Panc1 (cell line): ENCODE measurements at regions of chr4 and their contacts with region 1.

Region 1: DNA sequence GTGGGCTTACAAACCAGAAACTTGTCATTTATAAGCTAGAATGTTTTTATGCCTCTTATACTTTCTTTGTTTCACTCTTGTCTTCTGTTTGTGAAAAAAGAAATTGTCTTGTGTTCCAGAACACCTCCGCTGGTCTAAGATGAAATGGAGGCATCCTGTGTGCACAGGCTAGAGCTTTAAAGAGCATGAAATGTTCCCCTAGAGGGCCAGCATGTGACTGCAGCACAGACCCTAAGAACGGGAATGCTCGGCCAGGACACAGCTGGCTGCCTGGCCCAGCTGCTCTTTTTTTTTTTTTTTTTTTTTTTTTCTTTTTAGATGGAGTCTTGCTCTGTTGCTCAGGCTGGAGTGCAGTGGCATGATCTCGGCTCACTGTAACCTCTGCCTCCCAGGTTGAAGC is 33.6 kb downstream of the SETD7 start:
- DNase-seq: no peak
- ATAC-seq: no peak
- H3K4me3 ChIP-seq: no peak overlapping the region
- H3K27ac ChIP-seq: no peak overlapping the region
- H3K4me1 ChIP-seq: no peaks in the 10 kb centered on the region
- H3K27me3 ChIP-seq: no peaks in the 10 kb centered on the region
- CTCF ChIP-seq: no peak

Region 2: GRCh38 chr4:139419388-139419914 is 103.0 kb before region 1 on chr4:
- CTCF ChIA-PET with region 1: no interaction called
- POLR2A ChIA-PET with region 1: no interaction called
- in situ Hi-C with region 1: no loop called
- intact Hi-C with region 1: no loop called
- DNase-seq: no peak
- ATAC-seq: no peak
- H3K4me3 ChIP-seq: no peak overlapping the region
- H3K27ac ChIP-seq: no peak overlapping the region
- H3K4me1 ChIP-seq: no peaks in the 10 kb centered on the region
- H3K27me3 ChIP-seq: no peaks in the 10 kb centered on the region
- CTCF ChIP-seq: no peak

Region 3: GRCh38 chr4:139508581-139509237 is 13.7 kb before region 1 on chr4:
- CTCF ChIA-PET with region 1: interaction called, 14 read pairs
- POLR2A ChIA-PET with region 1: interaction called, 9 read pairs
- in situ Hi-C with region 1: no loop called
- intact Hi-C with region 1: no loop called
- DNase-seq: no peak
- ATAC-seq: no peak
- H3K4me3 ChIP-seq: no peak overlapping the region
- H3K27ac ChIP-seq: no peak overlapping the region
- H3K4me1 ChIP-seq: no peaks in the 10 kb centered on the region
- H3K27me3 ChIP-seq: no peaks in the 10 kb centered on the region
- CTCF ChIP-seq: no peak